Dendritic cell treated with granulocyte-macrophage colony-stimulating factor and Interleukin-4, amounts not matched to agents 40 ng/mL and 50 ng/mL, for 4 days (primary cell): ENCODE measurements at regions of chr3 and their contacts with region 1.

Region 1: DNA sequence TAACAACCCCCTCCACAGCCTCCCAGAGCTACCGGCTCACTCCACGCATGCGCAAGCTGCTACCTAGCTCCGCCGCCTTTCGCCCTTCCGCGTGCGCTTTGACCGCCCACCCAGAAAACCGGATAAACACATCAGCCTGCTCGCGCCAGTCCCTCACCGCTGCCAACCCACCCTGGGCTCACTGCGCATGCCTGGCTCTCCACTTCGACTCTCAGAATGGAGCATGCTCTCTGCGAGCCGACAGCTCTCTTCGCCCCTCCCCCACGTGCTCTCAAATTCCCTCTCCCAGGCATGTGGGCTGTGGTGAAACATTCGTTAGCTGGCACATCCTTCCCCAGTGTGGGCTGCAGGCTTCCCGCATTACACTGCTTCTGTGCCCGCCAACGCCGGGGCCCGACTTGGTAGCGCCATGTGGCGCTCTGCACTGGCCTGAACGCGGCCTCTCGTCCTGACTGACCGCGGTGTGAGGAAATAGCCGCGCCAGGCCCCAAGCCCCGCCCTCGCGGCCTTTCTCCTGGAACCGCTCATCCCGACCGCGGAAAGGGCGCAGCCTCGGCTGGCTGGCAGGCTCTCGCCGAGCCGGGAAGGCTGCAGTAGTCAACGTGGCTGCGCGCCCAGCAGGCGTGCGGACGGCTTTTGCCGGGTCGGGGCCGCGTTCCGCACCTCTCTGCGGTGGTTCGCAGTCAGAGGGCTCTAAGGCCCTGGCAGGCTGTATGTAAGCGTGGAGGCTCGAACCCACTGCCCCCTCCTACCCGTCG is 445 bp upstream of the MSL2 start:
- H3K4me3 Mint-ChIP-seq: peak overlapping the region; percentile 91
- H3K27ac Mint-ChIP-seq: peak overlapping the region; percentile 94
- H3K4me1 Mint-ChIP-seq: peaks cover 36% of the 10 kb centered on the region
- H3K27me3 Mint-ChIP-seq: no peaks in the 10 kb centered on the region

Region 2: GRCh38 chr3:135706758-135707375 is 489.7 kb before region 1 on chr3:
- intact Hi-C with region 1: no loop called
- H3K4me3 Mint-ChIP-seq: no peak overlapping the region
- H3K27ac Mint-ChIP-seq: no peak overlapping the region
- H3K4me1 Mint-ChIP-seq: no peaks in the 10 kb centered on the region
- H3K27me3 Mint-ChIP-seq: no peaks in the 10 kb centered on the region

Region 3: DNA sequence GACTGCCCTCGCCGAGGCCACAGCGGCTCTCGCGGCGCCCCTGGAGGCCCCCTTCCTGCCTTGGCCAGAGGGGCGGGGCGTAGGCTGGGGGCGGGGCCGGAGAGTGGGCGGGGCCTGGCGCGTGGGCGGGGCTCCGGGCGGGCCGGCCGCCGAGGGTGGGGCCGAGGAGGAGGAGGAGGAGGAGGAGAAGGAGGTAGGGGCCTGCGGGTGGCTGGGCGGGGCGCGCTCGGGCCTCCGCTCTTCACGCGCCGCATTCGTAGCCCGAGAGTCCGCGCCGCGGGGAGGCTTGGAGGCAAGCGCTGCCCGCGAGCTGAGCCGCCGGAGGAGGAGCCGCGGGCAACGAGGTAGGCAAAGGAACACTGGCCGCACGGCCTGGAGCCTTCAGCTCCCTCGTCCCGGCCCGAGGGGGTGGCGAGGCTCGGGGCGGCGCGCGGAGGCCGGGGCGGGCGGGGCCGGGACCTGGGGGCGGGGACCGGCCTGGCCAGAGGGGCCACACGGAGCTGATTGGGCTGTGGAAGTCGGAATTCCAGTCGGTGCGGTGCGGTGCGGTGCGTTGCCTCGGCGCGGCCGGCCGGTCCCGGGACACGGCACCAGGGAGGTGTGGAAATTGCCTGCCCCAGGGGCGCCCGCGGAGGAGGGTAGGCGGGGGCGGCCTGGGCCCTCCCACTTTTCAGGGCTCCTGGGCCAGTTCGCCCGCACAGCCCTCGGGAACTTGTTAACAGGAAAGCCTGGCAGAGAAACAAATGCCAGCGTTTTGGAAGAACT is 230.9 kb before region 1 on chr3 and contains the start of gene PPP2R3A:
- intact Hi-C with region 1: loop called (anchors 2 kb)
- H3K4me3 Mint-ChIP-seq: peak within 1 kb of the TSS; percentile 89
- H3K27ac Mint-ChIP-seq: peak within 1 kb of the TSS; percentile 76
- H3K4me1 Mint-ChIP-seq: peaks cover 18% of the 10 kb centered on the region
- H3K27me3 Mint-ChIP-seq: peaks cover 29% of the 10 kb centered on the region

Region 4: GRCh38 chr3:136209921-136210320 is 13.3 kb after region 1 on chr3:
- intact Hi-C with region 1: no loop called
- H3K4me3 Mint-ChIP-seq: no peak overlapping the region
- H3K27ac Mint-ChIP-seq: no peak overlapping the region
- H3K4me1 Mint-ChIP-seq: peaks cover 12% of the 10 kb centered on the region
- H3K27me3 Mint-ChIP-seq: peaks cover 3% of the 10 kb centered on the region

Region 5: DNA sequence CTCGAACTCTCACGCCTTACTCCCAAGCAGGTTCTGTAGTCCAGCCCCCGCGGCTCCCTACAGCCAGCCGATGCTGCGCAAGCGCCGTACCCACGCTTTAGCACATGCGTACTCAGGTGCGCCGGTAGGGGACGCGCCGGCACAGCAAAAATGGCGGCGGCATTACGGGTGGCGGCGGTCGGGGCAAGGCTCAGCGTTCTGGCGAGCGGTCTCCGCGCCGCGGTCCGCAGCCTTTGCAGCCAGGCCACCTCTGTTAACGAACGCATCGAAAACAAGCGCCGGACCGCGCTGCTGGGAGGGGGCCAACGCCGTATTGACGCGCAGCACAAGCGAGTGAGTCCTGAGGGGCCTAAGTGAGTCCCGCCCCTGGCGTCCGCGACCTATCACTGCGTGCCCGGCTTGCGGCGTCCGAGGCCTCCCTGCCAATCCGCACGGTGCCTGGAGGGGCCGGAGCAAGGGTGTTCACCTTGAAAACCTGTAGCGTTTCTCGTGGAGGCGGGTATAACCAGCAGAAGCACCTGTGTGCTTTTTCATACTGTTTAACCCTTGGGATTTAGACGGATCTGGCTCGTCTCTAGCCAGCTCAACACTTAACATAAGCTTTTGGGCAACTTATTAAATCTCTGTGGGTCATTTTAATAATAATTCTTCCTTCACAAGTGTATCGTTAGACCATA is 53.8 kb after region 1 on chr3 and contains the start of gene PCCB:
- intact Hi-C with region 1: loop called (anchors 1 kb)
- H3K4me3 Mint-ChIP-seq: peak within 1 kb of the TSS; percentile 86
- H3K27ac Mint-ChIP-seq: peak within 1 kb of the TSS; percentile 96
- H3K4me1 Mint-ChIP-seq: peaks cover 21% of the 10 kb centered on the region
- H3K27me3 Mint-ChIP-seq: no peaks in the 10 kb centered on the region

Region 6: DNA sequence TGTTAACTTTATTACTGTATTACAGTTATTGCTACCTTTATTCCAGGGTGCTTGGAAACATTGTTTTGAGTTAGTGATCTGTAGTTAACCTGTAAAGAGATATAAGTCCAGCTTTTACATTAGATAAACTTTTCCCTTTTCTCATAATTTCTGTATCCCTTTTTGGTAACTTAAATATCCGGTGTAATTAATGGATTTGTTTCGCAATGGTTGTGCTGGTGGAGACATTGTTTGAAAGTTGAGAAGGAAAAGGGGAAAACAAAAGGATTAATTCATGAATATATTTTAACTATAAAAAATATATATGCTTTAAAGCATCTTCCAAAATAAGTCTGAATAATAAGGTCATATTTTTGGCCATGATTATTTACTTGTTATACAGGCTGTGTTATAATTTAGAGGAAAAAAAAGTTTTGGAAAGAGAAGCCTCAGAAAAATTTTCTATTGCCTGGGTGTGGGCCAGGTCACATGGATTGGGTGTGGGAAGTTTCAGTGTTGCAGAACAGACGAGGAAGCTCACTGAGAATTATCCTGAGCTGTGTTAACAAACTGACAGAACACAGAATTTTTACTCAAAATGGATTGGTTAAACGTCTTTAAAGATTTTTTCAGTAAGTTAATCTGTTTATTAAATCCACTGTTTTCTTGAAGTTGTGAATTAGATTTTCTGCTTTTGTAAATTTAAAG is 733.5 kb after region 1 on chr3:
- intact Hi-C with region 1: loop called (anchors 10 kb)
- H3K4me3 Mint-ChIP-seq: peak overlapping the region; percentile 64
- H3K27ac Mint-ChIP-seq: peak overlapping the region; percentile 87
- H3K4me1 Mint-ChIP-seq: peaks cover 43% of the 10 kb centered on the region
- H3K27me3 Mint-ChIP-seq: no peaks in the 10 kb centered on the region